ENCODE measurements at regions of chr6 and their contacts with region 1.

Region 1: GRCh38 chr6:44361947-44362346 is 19.5 kb downstream of the SPATS1 start:
- DNase-seq: no peak

Region 2: GRCh38 chr6:44425951-44426350 is 64.0 kb after region 1 on chr6:
- intact Hi-C with region 1: loop called in 1 of 2 experiments (anchors 2 kb)
- DNase-seq: no peak

Region 3: GRCh38 chr6:44779130-44779826 is 417.3 kb after region 1 on chr6:
- intact Hi-C with region 1: no loop called
- DNase-seq: no peak